ENCODE measurements at regions of chr22 and their contacts with region 1.

Region 1: GRCh38 chr22:40498383-40499186 is 128.2 kb downstream of the SGSM3 start:
- DNase-seq: peak; percentile 80 to 84
- H3K4me3 ChIP-seq: no peak overlapping the region
- H3K4me3 Mint-ChIP-seq: peak overlapping the region; percentile 48
- H3K27ac Mint-ChIP-seq: peak overlapping the region; percentile 79
- H3K4me1 ChIP-seq: peaks cover 25% of the 10 kb centered on the region
- H3K4me1 Mint-ChIP-seq: peaks cover 29% of the 10 kb centered on the region
- H3K27me3 ChIP-seq: no peaks in the 10 kb centered on the region
- H3K27me3 Mint-ChIP-seq: no peaks in the 10 kb centered on the region
- CTCF ChIP-seq: no peak

Region 2: GRCh38 chr22:40509401-40510134 is 11.0 kb after region 1 on chr22:
- CTCF ChIA-PET with region 1: interaction called, 3 read pairs
- POLR2A ChIA-PET with region 1: interaction called, 3 read pairs
- intact Hi-C with region 1: loop called (anchors 1 kb)
- DNase-seq: peak; percentile 65 to 66
- H3K4me3 ChIP-seq: no peak overlapping the region
- H3K4me3 Mint-ChIP-seq: peak overlapping the region; percentile 39
- H3K27ac Mint-ChIP-seq: peak overlapping the region; percentile 9
- H3K4me1 ChIP-seq: peaks cover 50% of the 10 kb centered on the region
- H3K4me1 Mint-ChIP-seq: peaks cover 10% of the 10 kb centered on the region
- H3K27me3 ChIP-seq: no peaks in the 10 kb centered on the region
- H3K27me3 Mint-ChIP-seq: no peaks in the 10 kb centered on the region
- CTCF ChIP-seq: no peak

Region 3: DNA sequence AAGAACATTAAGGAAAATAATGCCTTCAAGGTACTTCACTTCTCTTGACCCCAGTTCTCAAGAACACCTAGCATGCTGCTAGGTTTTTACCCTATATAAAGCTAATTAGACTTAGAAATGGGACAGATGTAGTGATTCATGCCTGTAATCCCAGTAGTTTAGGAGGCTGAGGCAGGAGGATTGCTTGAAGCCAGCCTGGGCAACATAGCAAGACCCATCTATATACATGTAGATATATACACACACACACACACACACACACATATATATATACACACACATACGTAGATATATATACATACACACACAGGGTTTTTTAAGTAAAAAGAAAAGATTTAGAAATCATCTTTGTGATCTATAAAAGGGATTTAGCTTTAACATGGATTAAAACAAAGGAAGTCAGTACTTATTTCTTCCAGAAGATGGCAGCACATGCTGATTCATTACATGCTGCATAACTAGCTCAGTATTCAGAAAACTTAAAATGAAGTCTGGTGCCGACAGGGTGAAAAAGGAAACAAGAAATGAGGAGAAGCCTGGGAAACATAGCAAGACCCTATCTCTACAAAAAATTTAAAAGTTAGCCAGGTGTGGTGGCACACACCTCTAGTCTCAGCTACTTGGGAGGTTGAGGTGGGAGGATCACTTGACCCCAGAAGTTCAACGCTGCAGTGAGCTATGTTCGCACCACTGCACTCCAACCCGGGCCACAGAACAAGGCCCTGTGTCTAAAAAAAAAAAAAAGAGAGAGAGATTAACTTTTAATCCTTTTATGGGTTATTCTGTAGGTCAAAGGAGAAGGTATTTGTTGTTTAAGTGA is 424.1 kb after region 1 on chr22:
- CTCF ChIA-PET with region 1: no interaction called
- POLR2A ChIA-PET with region 1: no interaction called
- intact Hi-C with region 1: no loop called
- DNase-seq: peak in 1 of 2 experiments; percentile 56
- H3K4me3 ChIP-seq: no peak overlapping the region
- H3K4me3 Mint-ChIP-seq: no peak overlapping the region
- H3K27ac Mint-ChIP-seq: peak overlapping the region; percentile 34
- H3K4me1 ChIP-seq: no peaks in the 10 kb centered on the region
- H3K4me1 Mint-ChIP-seq: no peaks in the 10 kb centered on the region
- H3K27me3 ChIP-seq: no peaks in the 10 kb centered on the region
- H3K27me3 Mint-ChIP-seq: no peaks in the 10 kb centered on the region
- CTCF ChIP-seq: peak; percentile 52 to 66

Measured in Caco-2 (cell line).